Naive thymus-derived CD4-positive, alpha-beta T cell (primary cell): ENCODE measurements at regions of chr12 and their contacts with region 1.

Region 1: DNA sequence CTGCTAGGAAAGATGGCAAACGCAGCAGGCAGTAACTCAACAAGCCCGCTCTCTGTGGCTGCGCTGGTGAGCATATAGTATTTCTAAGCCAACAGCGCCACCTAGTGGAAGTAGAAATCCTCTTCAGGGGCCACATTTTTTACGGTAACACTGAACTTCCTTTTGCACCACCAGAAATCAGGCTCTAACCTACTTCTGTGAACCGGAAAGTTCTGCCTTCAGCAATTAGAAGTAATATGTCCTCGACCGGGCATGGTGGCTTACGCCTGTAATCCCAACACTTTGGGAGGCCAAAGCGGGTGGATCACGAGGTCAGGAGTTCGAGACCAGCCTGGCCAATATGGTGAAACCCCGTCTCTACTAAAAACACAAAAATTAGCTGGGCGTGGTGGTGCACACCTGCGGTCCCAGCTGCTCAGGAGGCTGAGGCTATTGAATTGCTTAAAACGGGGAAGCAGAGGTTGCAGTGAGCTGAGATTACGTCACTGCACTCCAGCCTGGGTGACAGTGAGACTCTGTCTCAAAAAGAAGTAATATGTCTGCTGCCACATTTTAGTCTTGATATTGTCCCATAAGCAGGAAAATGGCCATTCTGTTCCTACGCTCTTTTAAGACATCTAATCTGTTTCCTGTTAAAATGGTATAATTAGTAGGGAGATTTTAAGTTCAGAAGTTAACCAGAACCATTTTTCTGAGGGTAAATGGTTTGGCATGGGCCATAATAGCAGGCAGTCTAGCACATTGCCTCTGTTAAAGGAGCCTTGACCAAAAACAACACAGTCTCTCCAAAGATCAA is 26.8 kb downstream of the APOBEC1 start:
- DNase-seq: peak; percentile 39 to 87 (median 85)
- ATAC-seq: peak; percentile 91
- H3K4me3 ChIP-seq: peak overlapping the region; percentile 34
- H3K4me3 Mint-ChIP-seq: peak overlapping the region; percentile 46 to 88 (median 74)
- H3K27ac ChIP-seq: peak overlapping the region; percentile 37
- H3K27ac Mint-ChIP-seq: peak overlapping the region; percentile 43 to 93 (median 80)
- H3K4me1 ChIP-seq: peaks cover 9 to 10% of the 10 kb centered on the region in 2 donors
- H3K4me1 Mint-ChIP-seq: peaks cover 10 to 47% (median 40%) of the 10 kb centered on the region in 7 donors
- H3K27me3 ChIP-seq: no peaks in the 10 kb centered on the region
- H3K27me3 Mint-ChIP-seq: peaks cover under 1 to 20% (median 7%) of the 10 kb centered on the region in 5 donors

Region 2: DNA sequence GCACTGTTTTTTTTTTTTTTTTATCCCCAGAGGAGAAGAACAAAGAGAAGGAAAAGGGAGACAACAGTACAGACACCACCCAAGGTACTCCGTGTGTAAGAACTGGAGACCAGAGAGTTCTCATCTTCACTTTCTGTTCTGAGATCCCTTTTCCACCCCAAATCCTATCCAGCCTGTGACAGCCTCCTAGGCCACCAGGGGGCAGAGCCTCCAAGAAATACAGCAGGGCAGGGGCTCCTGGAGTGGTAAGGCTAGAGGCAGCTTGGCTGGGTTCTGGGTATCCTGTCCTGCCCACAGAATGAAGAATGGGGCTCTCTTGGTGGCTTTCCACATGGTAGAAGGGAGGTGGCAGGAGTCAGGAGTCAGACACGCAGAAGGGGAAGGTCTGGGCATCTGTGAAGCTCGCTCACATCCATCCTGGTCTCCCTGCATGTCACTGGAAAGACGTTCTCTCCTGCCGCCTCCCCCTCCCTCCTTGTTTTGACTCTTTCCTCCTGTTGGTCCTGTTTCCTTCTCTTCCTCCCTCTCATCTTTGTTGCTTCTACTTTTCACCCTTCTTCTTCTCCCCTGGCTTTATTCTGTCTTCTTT is 496.8 kb before region 1 on chr12:
- CTCF ChIA-PET with region 1: interaction called, 3 read pairs
- POLR2A ChIA-PET with region 1: no interaction called
- intact Hi-C with region 1: loop called (anchors 1 kb)
- DNase-seq: peak in 8 of 9 donors; percentile 33 to 60 (median 56)
- ATAC-seq: peak; percentile 83
- H3K4me3 ChIP-seq: no peak overlapping the region
- H3K4me3 Mint-ChIP-seq: no peak overlapping the region
- H3K27ac ChIP-seq: no peak overlapping the region
- H3K27ac Mint-ChIP-seq: no peak overlapping the region
- H3K4me1 ChIP-seq: peaks cover 0 to 3% of the 10 kb centered on the region in 2 donors
- H3K4me1 Mint-ChIP-seq: peaks cover 0 to 19% (median 5%) of the 10 kb centered on the region in 7 donors
- H3K27me3 ChIP-seq: no peaks in the 10 kb centered on the region
- H3K27me3 Mint-ChIP-seq: no peaks in the 10 kb centered on the region

Region 3: GRCh38 chr12:7319930-7320329 is 319.0 kb before region 1 on chr12:
- CTCF ChIA-PET with region 1: no interaction called
- POLR2A ChIA-PET with region 1: no interaction called
- intact Hi-C with region 1: loop called in 1 of 2 experiments (anchors 10 kb)
- DNase-seq: no peak
- ATAC-seq: no peak
- H3K4me3 ChIP-seq: no peak overlapping the region
- H3K4me3 Mint-ChIP-seq: no peak overlapping the region
- H3K27ac ChIP-seq: no peak overlapping the region
- H3K27ac Mint-ChIP-seq: no peak overlapping the region
- H3K4me1 ChIP-seq: no peaks in the 10 kb centered on the region
- H3K4me1 Mint-ChIP-seq: no peaks in the 10 kb centered on the region
- H3K27me3 ChIP-seq: no peaks in the 10 kb centered on the region
- H3K27me3 Mint-ChIP-seq: peaks cover 0 to 9% (median 2%) of the 10 kb centered on the region in 5 donors

Region 4: DNA sequence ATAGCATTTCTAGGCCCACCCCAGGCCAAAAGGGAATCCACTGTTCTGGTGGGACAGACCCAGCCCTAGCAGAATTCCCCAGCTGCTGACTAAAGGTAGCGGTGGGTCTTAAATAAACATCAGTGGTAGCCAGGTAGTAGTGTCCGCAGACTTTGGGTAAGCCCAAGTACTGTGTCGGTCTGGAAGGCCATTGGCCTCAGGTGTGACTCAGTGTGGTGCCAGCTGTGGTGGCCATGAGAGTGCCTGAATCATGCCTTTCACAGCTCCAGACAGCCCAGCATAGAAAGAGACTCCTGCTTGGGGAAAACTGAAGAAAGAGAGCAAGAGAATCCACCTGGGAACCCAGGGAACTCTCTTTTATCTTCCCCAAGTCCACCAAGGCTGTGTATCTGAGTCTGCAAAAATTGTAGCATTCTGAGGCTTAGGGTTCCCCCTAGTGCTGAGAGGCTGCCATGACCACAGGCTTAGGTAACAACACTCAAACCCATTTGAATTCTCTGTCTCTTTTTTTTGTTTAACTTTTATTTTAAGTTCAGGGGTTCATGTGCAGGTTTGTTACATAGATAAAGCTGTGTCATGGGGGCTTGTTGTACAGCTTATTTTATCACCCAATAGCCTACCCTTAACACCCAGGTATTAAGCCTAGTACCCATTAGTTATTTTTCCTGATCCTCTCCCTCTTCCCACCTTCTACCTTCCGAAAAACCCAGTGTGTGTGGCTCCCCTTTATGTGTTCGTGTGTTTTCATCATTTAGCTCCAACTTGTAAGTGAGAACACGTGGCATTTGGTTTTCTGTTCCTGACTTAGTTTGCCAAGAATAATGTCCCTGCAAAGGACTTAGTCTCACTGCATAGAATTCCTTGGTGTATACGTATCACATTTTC is 178.3 kb before region 1 on chr12:
- CTCF ChIA-PET with region 1: no interaction called
- POLR2A ChIA-PET with region 1: no interaction called
- intact Hi-C with region 1: loop called (anchors 1 to 5 kb)
- DNase-seq: peak in 8 of 9 donors; percentile 20 to 49 (median 42)
- ATAC-seq: peak; percentile 82
- H3K4me3 ChIP-seq: no peak overlapping the region
- H3K4me3 Mint-ChIP-seq: no peak overlapping the region
- H3K27ac ChIP-seq: no peak overlapping the region
- H3K27ac Mint-ChIP-seq: no peak overlapping the region
- H3K4me1 ChIP-seq: no peaks in the 10 kb centered on the region
- H3K4me1 Mint-ChIP-seq: no peaks in the 10 kb centered on the region
- H3K27me3 ChIP-seq: no peaks in the 10 kb centered on the region
- H3K27me3 Mint-ChIP-seq: peaks cover under 1 to 18% (median 10%) of the 10 kb centered on the region in 5 donors

Region 5: GRCh38 chr12:7806863-7807487 is 168.0 kb after region 1 on chr12:
- CTCF ChIA-PET with region 1: interaction called, 4 read pairs
- POLR2A ChIA-PET with region 1: no interaction called
- intact Hi-C with region 1: loop called in 1 of 2 experiments (anchors 2 kb)
- DNase-seq: peak; percentile 12 to 59 (median 40)
- ATAC-seq: peak; percentile 87
- H3K4me3 ChIP-seq: no peak overlapping the region
- H3K4me3 Mint-ChIP-seq: no peak overlapping the region
- H3K27ac ChIP-seq: no peak overlapping the region
- H3K27ac Mint-ChIP-seq: no peak overlapping the region
- H3K4me1 ChIP-seq: no peaks in the 10 kb centered on the region
- H3K4me1 Mint-ChIP-seq: peaks cover 0 to 2% (median 0%) of the 10 kb centered on the region in 7 donors
- H3K27me3 ChIP-seq: no peaks in the 10 kb centered on the region
- H3K27me3 Mint-ChIP-seq: peaks cover 0 to 4% (median 0%) of the 10 kb centered on the region in 5 donors